Astrocyte of the cerebellum (primary cell): ENCODE measurements at regions of chr19 and their contacts with region 1.

Region 1: GRCh38 chr19:7968796-7969554 is 25.5 kb upstream of the TIMM44 start:
- DNase-seq: no peak
- H3K4me3 ChIP-seq: no peak overlapping the region
- CTCF ChIP-seq: no peak

Region 2: GRCh38 chr19:8036434-8037099 is 67.6 kb after region 1 on chr19:
- in situ Hi-C with region 1: no loop called
- DNase-seq: no peak
- H3K4me3 ChIP-seq: no peak overlapping the region
- CTCF ChIP-seq: no peak

Region 3: DNA sequence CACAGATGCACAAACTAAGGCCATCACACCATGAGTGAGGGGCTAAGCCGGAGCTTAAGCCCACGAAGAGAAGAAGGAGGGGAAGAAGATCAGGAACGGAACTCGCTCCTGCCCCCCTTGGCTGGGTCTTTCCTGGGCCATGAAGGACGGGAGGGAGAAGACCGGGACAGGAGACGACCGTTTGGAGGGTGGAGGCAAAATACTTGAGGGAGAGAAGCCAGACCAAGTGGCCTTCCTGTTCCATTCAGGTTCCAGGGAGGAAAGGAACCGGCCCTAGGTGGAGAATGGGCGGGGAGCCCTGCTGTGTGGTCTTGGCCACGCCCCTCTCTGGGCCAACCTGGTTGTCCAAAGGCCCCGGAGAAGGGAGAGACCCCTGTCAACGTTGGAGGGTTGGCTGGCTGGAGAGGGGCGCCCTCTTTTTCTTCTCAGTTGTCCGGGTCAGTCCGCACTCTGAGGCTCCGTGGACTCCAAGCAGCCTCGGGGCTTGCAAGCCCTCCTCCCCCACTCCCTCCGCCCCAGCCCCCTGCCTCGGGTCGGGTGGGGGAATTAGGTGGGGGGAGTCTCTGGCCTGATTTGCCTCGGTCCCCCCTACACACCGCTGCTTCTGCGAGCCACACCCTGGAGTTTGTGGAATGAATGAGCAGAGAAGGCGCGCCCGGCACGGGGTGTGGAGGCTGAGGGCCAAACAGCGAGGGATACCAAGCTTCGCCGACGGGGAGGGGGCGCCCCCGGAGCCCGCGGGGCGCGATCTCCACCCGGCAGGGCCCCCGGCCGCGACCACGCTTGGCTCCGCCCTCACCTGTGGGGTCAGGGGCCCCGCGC is 179.6 kb after region 1 on chr19:
- in situ Hi-C with region 1: loop called (anchors 10 kb)
- DNase-seq: no peak
- H3K4me3 ChIP-seq: no peak overlapping the region
- CTCF ChIP-seq: no peak